Right ventricle myocardium inferior (tissue), 1 donor: ENCODE measurements at regions of chr2 and their contacts with region 1.

Region 1: DNA sequence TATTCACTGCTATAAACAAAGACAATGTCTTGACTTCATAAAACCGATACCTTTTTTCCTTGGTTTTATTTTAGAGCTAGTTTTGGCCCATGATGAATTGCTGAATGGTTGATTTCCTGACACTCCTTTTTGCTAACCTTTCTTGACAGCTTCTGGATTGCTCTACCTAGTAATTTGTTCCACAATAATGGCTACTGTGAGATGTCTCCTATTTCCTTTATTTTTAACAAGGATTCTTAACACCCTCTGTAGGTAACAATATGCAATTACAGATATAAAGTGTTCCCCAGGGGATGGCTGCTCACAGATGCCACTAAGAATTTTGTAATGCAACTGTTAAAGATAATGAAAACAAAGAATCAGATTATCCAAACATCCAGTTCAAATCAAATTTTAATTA is 100.8 kb upstream of the ATP5MC3 start:
- DNase-seq: no peak
- ATAC-seq: no peak

Region 2: DNA sequence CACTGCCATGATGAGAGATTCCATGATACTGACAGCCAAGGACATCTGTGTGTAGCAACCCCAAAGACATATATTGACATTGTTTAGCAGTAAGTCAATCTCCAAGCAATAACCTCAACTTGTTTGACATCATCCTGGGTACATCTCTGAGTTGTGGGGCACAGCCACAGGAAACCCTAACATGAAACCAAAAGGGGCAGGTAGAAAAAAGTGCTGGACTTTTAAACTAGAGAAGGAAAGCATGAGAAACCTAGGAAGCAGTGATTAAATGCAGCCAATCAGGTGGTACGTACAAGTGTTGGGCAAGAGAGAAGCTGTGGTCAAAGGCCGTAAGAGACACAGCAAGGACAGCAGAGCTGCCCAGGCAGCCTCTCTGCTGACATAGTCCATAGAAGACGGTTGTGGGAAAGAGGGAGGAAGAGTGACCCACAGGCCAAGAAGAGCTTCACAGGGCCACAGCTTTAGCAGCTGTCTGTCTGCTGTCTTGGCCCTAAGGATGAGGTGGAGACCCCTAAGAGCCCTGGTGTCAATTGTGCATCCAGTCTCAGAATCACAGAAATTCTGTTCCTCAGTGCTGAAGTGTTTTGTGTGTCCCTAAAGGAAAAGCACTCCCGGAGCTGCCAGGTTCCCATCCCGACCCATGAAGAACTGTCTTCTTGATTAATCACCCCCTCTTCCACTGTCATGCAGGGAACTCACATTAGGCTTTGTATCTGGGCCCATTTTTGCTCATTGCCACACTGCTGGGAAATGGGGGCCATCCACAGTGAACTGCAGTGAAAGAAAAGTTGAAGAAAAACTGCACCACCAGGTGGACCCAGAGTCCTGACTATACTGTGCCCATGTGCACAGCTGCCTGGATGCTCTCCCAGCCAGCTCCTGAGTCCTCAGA is 251.7 kb before region 1 on chr2:
- intact Hi-C with region 1: loop called (anchors 10 kb)
- DNase-seq: no peak
- ATAC-seq: peak; percentile 52

Region 3: GRCh38 chr2:175111200-175111657 is 171.1 kb before region 1 on chr2:
- intact Hi-C with region 1: loop called (anchors 10 kb)
- DNase-seq: no peak
- ATAC-seq: no peak

Region 4: GRCh38 chr2:175203621-175204496 is 78.4 kb before region 1 on chr2:
- intact Hi-C with region 1: loop called (anchors 2 kb)
- DNase-seq: no peak
- ATAC-seq: peak; percentile 58

Region 5: DNA sequence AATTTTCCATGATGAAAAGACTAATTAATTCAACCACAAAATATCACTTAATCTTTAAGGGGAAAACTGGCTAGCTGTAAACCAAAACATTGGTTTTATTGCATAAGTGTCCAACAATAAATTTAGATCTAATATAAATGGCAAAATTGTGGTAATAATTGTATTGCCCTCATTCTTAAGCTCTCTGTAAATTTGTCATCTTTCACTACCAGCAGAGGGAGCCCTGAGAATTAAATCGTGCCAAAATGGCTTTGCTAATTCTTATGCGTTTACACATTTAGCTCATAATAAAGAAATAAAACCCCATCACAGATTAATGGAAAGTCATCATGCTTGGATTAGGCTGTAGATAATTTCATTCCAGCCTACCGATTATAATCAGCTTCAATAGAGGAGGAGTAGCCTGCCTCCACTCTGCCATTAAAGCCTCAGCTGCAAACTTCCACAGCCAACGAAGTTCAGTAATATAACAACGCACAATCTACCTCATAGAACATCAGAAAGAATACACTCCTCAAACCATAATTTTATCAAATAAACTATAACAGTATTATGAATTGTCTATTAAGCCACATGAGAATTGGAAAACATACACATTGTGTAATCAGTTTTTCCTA is 30.8 kb before region 1 on chr2:
- intact Hi-C with region 1: loop called (anchors 2 kb)
- DNase-seq: no peak
- ATAC-seq: no peak

Region 6: GRCh38 chr2:175318542-175318941 is 36.3 kb after region 1 on chr2:
- intact Hi-C with region 1: no loop called
- DNase-seq: no peak
- ATAC-seq: no peak